ENCODE measurements at regions of chr4 and their contacts with region 1.

Region 1: DNA sequence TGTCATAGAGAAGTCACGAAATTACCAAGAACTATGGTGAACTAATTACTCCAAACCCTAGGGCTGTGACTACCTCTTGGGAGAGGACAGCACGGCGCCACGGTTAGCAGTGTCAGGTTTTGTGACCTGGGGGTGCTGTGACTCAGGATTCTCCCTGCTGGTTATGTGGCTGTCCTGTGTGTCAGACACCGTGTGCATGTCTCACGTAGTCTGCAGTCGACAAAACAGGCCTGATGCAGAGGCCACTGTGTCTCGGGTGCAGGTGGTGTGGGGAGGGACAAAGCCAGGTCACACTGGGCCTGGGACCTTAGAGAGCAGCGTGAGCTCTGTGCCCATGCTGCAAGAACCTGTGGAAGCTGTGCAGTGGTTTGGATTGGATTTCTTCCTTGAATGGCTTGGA is 34.1 kb downstream of the TNIP2 start:
- DNase-seq: no peak
- ATAC-seq: no peak
- H3K4me3 ChIP-seq: no peak overlapping the region
- H3K27ac ChIP-seq: no peak overlapping the region
- H3K4me1 ChIP-seq: no peaks in the 10 kb centered on the region
- H3K27me3 ChIP-seq: no peaks in the 10 kb centered on the region
- CTCF ChIP-seq: no peak

Region 2: DNA sequence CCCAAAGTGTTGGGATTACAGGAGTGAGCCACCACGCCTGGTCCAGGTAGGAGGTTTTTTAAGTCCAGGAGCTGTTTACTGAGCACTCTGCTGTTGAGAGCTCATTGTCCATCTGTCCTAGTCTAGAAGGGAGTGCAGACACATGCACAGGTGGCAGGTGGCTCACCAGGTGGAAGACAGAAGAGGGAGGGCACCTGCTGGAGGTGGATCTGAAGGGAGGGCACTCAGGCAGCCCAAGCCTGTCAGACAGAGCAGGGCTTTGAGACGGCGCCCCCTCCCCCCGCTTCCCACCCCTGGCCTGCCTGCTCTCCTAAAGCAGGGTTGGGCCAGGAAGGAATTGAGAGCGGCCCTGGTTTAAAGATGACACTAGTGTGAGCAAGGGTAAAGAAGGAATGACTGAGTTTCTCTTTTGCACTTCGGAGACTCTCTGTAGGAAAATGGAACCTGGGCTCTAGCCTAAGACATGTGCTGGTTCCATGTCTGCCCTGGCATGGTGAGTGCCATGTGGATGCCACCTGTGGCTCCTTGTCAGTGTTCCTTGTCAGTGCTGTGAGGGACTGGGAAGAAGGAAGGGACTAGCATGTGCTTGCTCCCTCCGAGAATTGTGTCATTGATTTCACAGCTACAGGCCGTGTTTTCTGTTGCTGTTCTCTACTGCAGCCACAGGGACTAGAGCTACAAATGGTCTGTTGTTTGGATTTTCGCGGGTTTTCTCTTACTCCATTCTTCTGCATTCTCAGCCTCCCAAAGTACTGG is 74.5 kb before region 1 on chr4:
- CTCF ChIA-PET with region 1: no interaction called
- POLR2A ChIA-PET with region 1: interaction called, 20 read pairs
- intact Hi-C with region 1: no loop called
- DNase-seq: no peak
- ATAC-seq: no peak
- H3K4me3 ChIP-seq: no peak overlapping the region
- H3K27ac ChIP-seq: no peak overlapping the region
- H3K4me1 ChIP-seq: no peaks in the 10 kb centered on the region
- H3K27me3 ChIP-seq: no peaks in the 10 kb centered on the region
- CTCF ChIP-seq: no peak

Region 3: GRCh38 chr4:2936653-2937145 is 214.7 kb after region 1 on chr4:
- CTCF ChIA-PET with region 1: no interaction called
- POLR2A ChIA-PET with region 1: no interaction called
- intact Hi-C with region 1: no loop called
- DNase-seq: peak; percentile 80
- ATAC-seq: peak; percentile 47
- H3K4me3 ChIP-seq: peak overlapping the region; percentile 98
- H3K27ac ChIP-seq: peak overlapping the region; percentile 92
- H3K4me1 ChIP-seq: peaks cover 36% of the 10 kb centered on the region
- H3K27me3 ChIP-seq: no peaks in the 10 kb centered on the region
- CTCF ChIP-seq: no peak

Region 4: DNA sequence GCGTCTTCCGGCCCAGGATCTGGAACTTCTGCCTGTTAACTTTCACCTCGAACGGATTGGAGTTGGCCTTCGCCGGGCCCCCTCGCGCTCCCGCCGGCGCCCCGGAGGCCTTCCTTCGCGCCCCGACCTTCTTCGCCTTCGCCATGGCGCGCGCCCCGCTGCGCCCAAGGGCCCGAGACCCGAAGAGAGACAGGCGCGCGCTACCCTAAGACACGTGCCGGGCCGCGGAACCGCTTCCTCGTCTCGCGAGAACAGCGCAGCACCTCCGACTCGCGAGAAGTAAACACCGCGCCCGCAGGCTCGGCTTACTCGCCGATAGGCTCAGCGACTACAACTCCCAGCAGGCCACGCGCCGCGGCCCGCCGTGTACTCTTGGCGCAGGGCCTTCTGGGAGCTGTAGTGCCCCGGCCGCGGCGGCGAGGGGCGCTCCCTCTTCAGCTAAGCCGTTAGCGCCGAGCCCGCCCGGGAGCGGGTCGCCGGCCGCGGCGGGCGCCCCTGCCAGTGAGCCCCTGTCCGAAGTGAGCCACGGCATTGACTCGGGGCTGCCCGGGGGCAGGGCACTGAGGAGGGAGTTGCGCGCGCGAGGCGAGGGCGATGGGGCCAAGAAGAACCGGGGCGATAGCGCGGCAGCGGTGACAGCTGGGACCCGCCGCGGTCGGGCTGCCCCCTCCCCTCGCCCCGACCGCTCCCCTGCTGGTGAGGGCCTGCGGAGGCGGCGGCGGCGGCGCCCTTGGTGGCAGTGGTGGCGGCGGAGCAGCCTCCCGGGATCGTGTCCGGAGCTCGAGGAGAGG is 241.3 kb after region 1 on chr4 and contains the starts of genes GRK4 and NOP14:
- CTCF ChIA-PET with region 1: no interaction called
- POLR2A ChIA-PET with region 1: no interaction called
- intact Hi-C with region 1: no loop called
- DNase-seq: peak; percentile 96
- ATAC-seq: peak; percentile 90
- H3K4me3 ChIP-seq: peak within 1 kb of the TSS; percentile 86
- H3K27ac ChIP-seq: peak within 1 kb of the TSS; percentile 59
- H3K4me1 ChIP-seq: peaks cover 6% of the 10 kb centered on the region; the same call in 1 of the 2 replicates
- H3K27me3 ChIP-seq: no peaks in the 10 kb centered on the region
- CTCF ChIP-seq: peak; percentile 27; the same call in 1 of the 2 replicates
- total RNA-seq, gene GRK4: 2.9 and 3.7 TPM in 2 replicates
- total RNA-seq, gene NOP14: 26.0 and 30.9 TPM in 2 replicates

Measured in PC-3 (cell line).